Activated CD4-positive, alpha-beta T cell treated with anti-CD3 and anti-CD28 coated beads for 36 hours (primary cell): ENCODE measurements at regions of chr16 and their contacts with region 1.

Region 1: GRCh38 chr16:30698139-30698815 is 694 bp upstream of the SRCAP start:
- DNase-seq: peak; percentile 100
- ATAC-seq: peak; percentile 75
- H3K4me3 Mint-ChIP-seq: peak overlapping the region; percentile 96
- H3K27ac Mint-ChIP-seq: peak overlapping the region; percentile 99
- H3K4me1 Mint-ChIP-seq: peaks cover 33% of the 10 kb centered on the region
- H3K27me3 Mint-ChIP-seq: no peaks in the 10 kb centered on the region

Region 2: DNA sequence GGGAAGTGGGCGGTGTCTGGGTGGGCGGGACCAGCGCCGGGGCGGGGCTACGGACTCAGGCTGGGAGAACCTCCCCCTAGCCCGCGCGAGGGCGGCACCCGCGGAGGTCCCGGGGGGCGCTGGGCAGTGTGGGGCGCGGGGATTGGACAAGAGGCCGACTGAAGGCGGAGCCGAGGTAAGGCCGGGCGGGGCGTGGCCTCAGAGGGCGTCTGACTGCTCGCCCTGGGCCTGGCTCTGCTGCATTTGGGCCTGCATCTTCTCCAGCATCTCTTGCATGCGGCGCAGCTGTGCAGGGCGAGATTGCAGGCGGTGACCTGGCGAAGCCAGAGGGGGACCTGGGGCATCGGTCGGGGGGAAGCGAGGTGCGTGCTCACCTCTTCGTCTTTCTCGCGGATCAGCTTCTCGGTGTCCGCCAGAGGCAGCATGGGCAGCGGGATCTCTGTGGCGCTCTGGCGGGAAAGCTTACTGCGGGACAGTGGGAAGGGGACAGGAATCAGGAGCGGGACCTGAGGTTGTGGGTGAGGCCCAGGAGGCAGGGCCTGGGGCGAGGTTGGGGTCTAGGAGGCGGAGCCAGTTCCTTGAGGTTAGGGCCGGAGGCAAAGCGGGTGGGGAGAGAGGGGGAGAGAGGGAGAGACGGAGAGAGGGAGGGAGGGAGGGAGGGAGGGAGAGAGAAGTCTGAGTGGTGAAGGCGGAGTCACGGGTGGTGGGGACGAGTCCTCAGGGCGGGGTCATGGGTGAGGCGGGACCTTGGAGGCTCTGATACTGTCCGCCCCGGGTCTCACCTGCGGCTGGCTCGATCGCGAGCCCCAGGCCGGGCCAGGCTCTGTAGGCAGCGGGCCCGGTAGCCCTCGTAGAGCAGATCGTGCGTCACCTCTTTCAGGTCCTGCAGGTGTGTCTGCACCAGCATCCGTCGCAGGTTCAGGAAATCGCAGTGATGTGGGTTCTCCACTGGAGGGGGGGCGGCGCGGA is 319.8 kb before region 1 on chr16:
- CTCF ChIA-PET with region 1: no interaction called
- POLR2A ChIA-PET with region 1: interaction called, 4 read pairs
- intact Hi-C with region 1: loop called in 1 of 2 experiments (anchors 1 kb)
- DNase-seq: peak; percentile 100
- ATAC-seq: peak; percentile 87
- H3K4me3 Mint-ChIP-seq: peak overlapping the region; percentile 99
- H3K27ac Mint-ChIP-seq: peak overlapping the region; percentile 99
- H3K4me1 Mint-ChIP-seq: peaks cover 44% of the 10 kb centered on the region
- H3K27me3 Mint-ChIP-seq: no peaks in the 10 kb centered on the region

Region 3: GRCh38 chr16:30534368-30535105 is 163.7 kb before region 1 on chr16 and contains the start of gene ZNF747:
- CTCF ChIA-PET with region 1: interaction called, 3 read pairs
- POLR2A ChIA-PET with region 1: no interaction called
- intact Hi-C with region 1: loop called in 1 of 2 experiments (anchors 1 kb)
- DNase-seq: peak; percentile 95
- ATAC-seq: peak; percentile 80
- H3K4me3 Mint-ChIP-seq: peak within 1 kb of the TSS; percentile 91
- H3K27ac Mint-ChIP-seq: peak within 1 kb of the TSS; percentile 100
- H3K4me1 Mint-ChIP-seq: peaks cover 44% of the 10 kb centered on the region
- H3K27me3 Mint-ChIP-seq: no peaks in the 10 kb centered on the region
- total RNA-seq, gene ZNF747: 6.3 to 8.0 TPM

Region 4: GRCh38 chr16:30650369-30651123 is 47.7 kb before region 1 on chr16 and contains the start of gene PRR14:
- CTCF ChIA-PET with region 1: interaction called, 13 read pairs
- POLR2A ChIA-PET with region 1: no interaction called
- intact Hi-C with region 1: loop called (anchors 1 kb)
- DNase-seq: peak; percentile 100
- ATAC-seq: peak; percentile 82
- H3K4me3 Mint-ChIP-seq: peak within 1 kb of the TSS; percentile 95
- H3K27ac Mint-ChIP-seq: peak within 1 kb of the TSS; percentile 97
- H3K4me1 Mint-ChIP-seq: peaks cover 21% of the 10 kb centered on the region
- H3K27me3 Mint-ChIP-seq: no peaks in the 10 kb centered on the region
- total RNA-seq, gene PRR14: 76.8 to 77.8 TPM

Region 5: GRCh38 chr16:30874821-30875717 is 176.8 kb after region 1 on chr16:
- CTCF ChIA-PET with region 1: no interaction called
- POLR2A ChIA-PET with region 1: no interaction called
- intact Hi-C with region 1: loop called in 1 of 2 experiments (anchors 1 kb)
- DNase-seq: peak; percentile 94
- ATAC-seq: peak; percentile 82
- H3K4me3 Mint-ChIP-seq: peak overlapping the region; percentile 87
- H3K27ac Mint-ChIP-seq: peak overlapping the region; percentile 93
- H3K4me1 Mint-ChIP-seq: peaks cover 24% of the 10 kb centered on the region
- H3K27me3 Mint-ChIP-seq: no peaks in the 10 kb centered on the region

Region 6: DNA sequence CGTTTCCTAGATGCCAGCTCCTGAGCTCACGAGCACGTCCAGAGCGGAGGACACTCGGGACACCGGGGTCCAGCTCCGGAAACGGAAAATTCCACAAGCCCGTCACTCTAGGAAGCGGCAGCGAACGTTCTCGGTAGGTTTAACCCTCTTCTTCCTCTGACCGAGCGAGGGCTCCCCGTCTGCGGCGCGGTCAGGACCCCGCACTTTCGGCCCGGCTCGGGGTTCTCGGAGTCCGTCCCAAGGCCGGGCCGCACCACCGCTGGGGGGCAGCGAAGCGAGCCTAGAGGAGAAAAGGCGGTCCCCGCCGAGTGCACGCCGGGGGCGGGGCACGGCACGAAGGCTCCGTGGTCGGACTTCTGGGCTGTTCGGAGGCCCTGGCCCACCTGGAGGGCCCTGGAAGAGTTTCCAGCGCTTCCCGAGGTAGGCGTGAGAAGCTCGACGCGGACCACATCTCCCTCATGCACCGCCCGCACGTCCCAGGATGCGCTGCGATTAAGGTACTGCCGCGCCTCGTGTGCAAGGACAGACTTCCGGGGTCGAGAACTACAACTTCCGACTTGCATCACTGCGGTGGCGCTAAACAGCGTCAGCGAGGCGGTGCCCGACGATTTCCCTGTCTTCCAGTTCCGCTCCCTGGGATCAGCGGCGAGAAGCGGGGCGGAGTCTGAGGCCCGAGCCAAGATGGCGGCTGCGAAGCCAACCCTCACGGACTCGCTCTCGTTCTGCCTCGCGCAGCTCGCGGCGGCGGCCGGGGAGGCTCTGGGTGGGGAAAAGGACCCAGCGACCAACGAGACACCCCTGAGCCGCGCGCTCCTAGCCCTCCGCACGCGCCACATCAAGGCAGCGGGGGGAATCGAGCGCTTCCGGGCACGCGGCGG is 760.8 kb after region 1 on chr16 and contains the start of gene ARMC5:
- CTCF ChIA-PET with region 1: no interaction called
- POLR2A ChIA-PET with region 1: no interaction called
- intact Hi-C with region 1: loop called in 1 of 2 experiments (anchors 1 kb)
- DNase-seq: peak; percentile 98
- ATAC-seq: peak; percentile 81
- H3K4me3 Mint-ChIP-seq: peak within 1 kb of the TSS; percentile 85
- H3K27ac Mint-ChIP-seq: peak within 1 kb of the TSS; percentile 94
- H3K4me1 Mint-ChIP-seq: peaks cover 42% of the 10 kb centered on the region
- H3K27me3 Mint-ChIP-seq: no peaks in the 10 kb centered on the region
- total RNA-seq, gene ARMC5: 7.0 to 7.9 TPM